Heart right ventricle (tissue), 16 donors: ENCODE measurements at regions of chr1 and their contacts with region 1.

Region 1: DNA sequence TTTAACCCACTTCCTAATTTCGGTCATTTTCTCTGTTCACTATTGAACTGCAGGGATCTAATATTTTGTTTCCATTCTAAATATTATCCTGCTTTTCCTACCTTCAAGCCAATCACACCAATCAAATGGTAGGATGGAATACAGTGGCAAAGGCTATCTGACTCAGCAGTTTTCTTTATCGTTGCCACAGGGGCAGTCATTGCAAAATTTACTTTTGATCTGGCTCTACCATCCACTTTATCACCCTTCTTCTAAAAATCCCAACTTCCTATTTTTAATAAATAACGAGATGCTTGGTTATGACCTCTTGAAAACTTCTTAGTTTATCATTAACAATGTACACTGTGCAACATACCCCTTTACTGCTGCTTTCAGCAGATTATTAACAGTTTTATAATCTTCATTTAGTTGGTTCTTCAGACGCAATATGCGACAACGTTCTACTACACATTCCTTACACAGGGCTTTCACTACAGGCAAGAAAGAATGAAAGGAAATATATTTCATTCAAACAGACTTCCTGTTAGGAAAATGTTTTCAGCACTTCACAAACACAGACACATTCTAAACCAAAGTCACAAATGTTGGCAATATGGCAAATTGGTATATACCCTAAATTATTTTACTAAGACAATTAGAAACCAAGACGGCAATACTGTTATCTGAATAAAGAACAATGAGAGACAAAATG is 52.3 kb upstream of the RAP1GAP start:
- DNase-seq: no peak
- ATAC-seq: no peak
- H3K4me3 ChIP-seq: no peak overlapping the region
- H3K27ac ChIP-seq: no peak overlapping the region
- H3K4me1 ChIP-seq: no peaks in the 10 kb centered on the region
- H3K27me3 ChIP-seq: no peaks in the 10 kb centered on the region
- CTCF ChIP-seq: no peak

Region 2: GRCh38 chr1:19815801-19816736 is 1905.4 kb before region 1 on chr1:
- intact Hi-C with region 1: loop called in 1 of 10 experiments (anchors 5 kb)
- DNase-seq: no peak
- ATAC-seq: peak in 1 of 8 donors; percentile 38
- H3K4me3 ChIP-seq: no peak overlapping the region
- H3K27ac ChIP-seq: no peak overlapping the region
- H3K4me1 ChIP-seq: no peaks in the 10 kb centered on the region
- H3K27me3 ChIP-seq: peaks cover 0 to 6% (median 0%) of the 10 kb centered on the region in 7 donors
- CTCF ChIP-seq: no peak